ENCODE measurements at regions of chr11 and their contacts with region 1.

Region 1: DNA sequence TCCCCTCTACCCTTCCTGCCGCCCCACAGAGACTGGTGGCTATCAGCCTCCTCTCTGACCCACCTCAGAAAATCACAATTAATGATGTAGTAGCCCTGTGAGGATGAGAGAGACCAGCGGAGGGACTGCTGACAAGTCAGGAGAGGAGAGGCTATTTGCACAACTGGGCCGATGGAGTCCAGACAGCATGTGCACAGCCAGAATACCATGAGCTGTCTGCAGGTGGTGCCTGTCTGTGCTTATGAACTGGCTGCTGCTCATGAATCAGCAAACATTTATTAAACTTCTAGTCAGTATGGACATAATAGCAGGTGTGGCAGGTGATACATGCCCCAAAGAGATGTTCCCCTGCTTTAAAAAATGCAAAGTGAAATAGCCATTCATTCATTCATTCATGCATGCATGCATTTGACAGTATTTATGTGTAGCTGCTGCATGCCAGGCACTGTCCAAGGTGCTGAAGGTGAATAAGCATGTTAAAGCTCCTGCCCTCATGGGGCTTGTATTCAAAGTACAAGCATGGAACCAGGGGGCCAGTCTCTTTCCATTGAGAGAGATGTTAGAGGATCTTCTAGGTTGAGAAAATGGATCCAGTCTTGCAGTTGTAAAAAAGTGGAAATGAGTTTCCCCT is 141.3 kb downstream of the GRIK4 start:
- DNase-seq: no peak
- H3K4me3 ChIP-seq: no peak overlapping the region
- H3K27ac ChIP-seq: no peak overlapping the region
- H3K4me1 ChIP-seq: no peaks in the 10 kb centered on the region
- H3K27me3 ChIP-seq: no peaks in the 10 kb centered on the region
- CTCF ChIP-seq: no peak
- POLR2A ChIP-seq: no peak

Region 2: GRCh38 chr11:120295084-120295483 is 357.7 kb before region 1 on chr11:
- intact Hi-C with region 1: no loop called
- DNase-seq: no peak
- H3K4me3 ChIP-seq: no peak overlapping the region
- H3K27ac ChIP-seq: no peak overlapping the region
- H3K4me1 ChIP-seq: no peaks in the 10 kb centered on the region
- H3K27me3 ChIP-seq: no peaks in the 10 kb centered on the region
- CTCF ChIP-seq: no peak
- POLR2A ChIP-seq: no peak

Region 3: GRCh38 chr11:120622189-120622875 is 30.5 kb before region 1 on chr11:
- intact Hi-C with region 1: loop called (anchors 1 kb)
- DNase-seq: no peak
- H3K4me3 ChIP-seq: no peak overlapping the region
- H3K27ac ChIP-seq: no peak overlapping the region
- H3K4me1 ChIP-seq: no peaks in the 10 kb centered on the region
- H3K27me3 ChIP-seq: no peaks in the 10 kb centered on the region
- CTCF ChIP-seq: no peak
- POLR2A ChIP-seq: no peak

Measured in breast epithelium (tissue), 4 donors.